PC-3 (cell line): ENCODE measurements at regions of chr6 and their contacts with region 1.

Region 1: DNA sequence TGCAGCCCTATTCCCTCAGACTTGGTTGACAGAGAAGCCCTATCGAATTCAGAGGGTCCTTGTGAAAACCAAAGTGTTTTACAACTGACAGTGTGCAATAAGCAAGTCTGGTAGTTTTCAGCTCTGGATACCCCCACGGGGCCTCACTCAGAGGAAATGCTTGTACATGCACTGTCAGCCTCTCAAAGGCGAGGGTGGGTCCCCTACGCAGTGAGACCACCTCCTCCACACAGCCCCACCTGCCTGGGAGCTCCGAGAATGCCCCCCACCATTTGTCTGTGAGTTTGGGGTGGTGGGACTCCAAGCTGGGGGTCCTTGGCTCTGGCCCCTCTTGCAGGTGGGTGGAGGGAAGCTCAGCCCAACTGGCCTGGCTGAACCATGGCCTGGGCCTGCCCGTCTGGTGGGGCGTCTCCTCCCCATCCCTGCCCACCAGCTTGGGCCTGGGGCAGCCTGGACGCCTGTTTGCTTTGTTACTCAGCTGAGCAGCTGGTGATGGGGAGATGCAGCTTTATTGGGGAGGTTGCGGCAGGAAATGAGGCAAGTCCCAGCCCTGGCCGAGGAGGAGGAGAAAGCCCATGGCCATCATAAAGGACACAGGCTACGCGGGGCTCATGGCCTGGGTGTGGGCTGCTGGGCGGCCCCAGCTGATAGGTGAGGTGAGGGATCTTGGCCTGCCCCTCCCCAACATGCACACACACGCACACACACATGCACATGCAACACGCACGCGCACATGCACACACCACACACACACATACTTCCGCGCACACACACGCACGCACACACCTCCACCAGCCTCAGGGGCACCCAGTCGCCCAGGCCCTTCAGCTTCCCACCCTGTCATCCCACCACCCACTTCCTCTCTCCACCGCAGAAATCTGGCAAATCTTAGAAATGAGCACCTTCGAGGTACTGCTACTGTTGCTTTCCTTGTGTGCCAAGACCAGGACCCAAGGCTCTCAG is 1.5 kb downstream of the SPDEF start:
- DNase-seq: peak; percentile 80
- ATAC-seq: peak; percentile 58
- H3K4me3 ChIP-seq: peak overlapping the region; percentile 73
- H3K27ac ChIP-seq: peak overlapping the region; percentile 65
- H3K4me1 ChIP-seq: peaks cover 43% of the 10 kb centered on the region
- H3K27me3 ChIP-seq: no peaks in the 10 kb centered on the region
- CTCF ChIP-seq: no peak

Region 2: GRCh38 chr6:34310817-34311216 is 243.8 kb before region 1 on chr6:
- CTCF ChIA-PET with region 1: interaction called, 10 read pairs
- POLR2A ChIA-PET with region 1: no interaction called
- intact Hi-C with region 1: no loop called
- DNase-seq: no peak
- ATAC-seq: no peak
- H3K4me3 ChIP-seq: no peak overlapping the region
- H3K27ac ChIP-seq: no peak overlapping the region
- H3K4me1 ChIP-seq: no peaks in the 10 kb centered on the region
- H3K27me3 ChIP-seq: no peaks in the 10 kb centered on the region
- CTCF ChIP-seq: no peak

Region 3: GRCh38 chr6:34514593-34515472 is 39.8 kb before region 1 on chr6:
- CTCF ChIA-PET with region 1: no interaction called
- POLR2A ChIA-PET with region 1: no interaction called
- intact Hi-C with region 1: no loop called
- DNase-seq: no peak
- ATAC-seq: no peak
- H3K4me3 ChIP-seq: no peak overlapping the region
- H3K27ac ChIP-seq: no peak overlapping the region
- H3K4me1 ChIP-seq: no peaks in the 10 kb centered on the region
- H3K27me3 ChIP-seq: no peaks in the 10 kb centered on the region
- CTCF ChIP-seq: no peak

Region 4: DNA sequence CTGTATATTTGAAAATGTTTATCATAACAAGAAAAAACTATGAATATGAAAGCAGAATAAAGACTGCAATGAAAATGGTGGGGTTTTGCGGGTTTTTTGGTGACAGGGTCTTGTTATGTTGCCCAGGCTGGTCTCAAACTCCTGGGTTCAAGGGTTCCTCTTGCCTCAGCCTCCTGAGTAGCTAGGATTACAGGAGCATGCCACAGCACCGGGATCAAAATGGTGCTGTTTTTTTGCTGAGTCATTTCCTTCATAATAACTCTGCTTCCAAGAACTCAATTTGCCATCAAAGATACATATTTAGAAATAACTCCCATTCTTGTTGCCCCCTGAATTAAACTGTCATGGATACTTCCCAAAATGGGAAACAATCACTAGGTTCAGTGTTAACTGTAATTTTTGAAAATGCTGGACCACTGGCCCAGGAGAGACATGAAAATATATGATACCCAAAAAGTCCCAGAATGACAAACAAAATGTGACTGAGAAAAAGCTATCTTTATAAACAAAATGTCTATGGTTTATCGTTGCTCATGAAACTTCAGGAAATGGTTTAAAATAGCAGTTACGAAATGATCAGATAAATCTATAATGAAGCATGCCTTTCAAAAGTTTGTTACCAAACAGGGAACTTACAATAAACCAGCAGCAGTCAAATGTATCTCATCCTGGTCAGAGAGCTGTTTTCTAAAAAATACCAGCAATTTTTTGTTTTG is 109.8 kb after region 1 on chr6:
- CTCF ChIA-PET with region 1: no interaction called
- POLR2A ChIA-PET with region 1: no interaction called
- intact Hi-C with region 1: no loop called
- DNase-seq: peak; percentile 9
- ATAC-seq: no peak
- H3K4me3 ChIP-seq: no peak overlapping the region
- H3K27ac ChIP-seq: peak overlapping the region; percentile 56
- H3K4me1 ChIP-seq: peaks cover 12% of the 10 kb centered on the region
- H3K27me3 ChIP-seq: no peaks in the 10 kb centered on the region
- CTCF ChIP-seq: no peak